ENCODE measurements at regions of chr10 and their contacts with region 1.

Region 1: DNA sequence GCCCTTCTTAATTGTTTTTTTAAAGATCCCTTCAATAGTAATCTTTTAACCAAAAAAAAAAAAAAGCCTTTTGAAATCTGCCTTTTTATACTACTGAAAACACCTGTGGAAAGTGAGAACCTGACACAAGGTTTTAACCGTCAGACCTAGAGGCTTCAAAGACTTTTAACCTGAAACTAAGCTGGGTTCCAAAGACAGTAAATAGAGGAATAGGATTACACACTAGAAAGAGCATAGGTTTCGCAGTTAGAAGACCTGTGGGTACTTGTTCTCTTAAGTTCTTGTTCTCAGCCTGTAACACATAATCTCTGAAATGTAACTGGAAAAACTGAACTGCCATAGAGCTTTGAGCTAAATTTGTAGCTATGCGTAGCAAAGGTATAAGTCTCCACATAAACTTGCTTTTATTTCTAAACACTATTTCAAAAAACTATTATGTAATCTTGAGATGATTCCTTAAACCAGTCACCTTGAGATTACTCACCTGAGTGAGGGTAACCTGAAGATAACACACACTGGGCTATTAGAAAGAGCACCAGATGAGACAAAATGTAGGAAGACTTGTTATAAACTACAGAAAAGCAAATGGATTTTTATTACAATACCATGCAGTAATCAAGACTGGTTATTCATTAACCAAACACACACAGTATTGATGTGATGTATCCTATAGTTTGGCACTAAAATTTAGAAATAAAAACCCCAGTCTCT is 196.6 kb upstream of the FRMD4A start:
- DNase-seq: no peak
- ATAC-seq: peak; percentile 36
- H3K4me3 ChIP-seq: no peak overlapping the region
- H3K27ac ChIP-seq: no peak overlapping the region
- H3K4me1 ChIP-seq: no peaks in the 10 kb centered on the region
- H3K27me3 ChIP-seq: no peaks in the 10 kb centered on the region
- CTCF ChIP-seq: no peak
- EP300 ChIP-seq: no peak
- POLR2A ChIP-seq: no peak
- RAD21 ChIP-seq: no peak

Region 2: DNA sequence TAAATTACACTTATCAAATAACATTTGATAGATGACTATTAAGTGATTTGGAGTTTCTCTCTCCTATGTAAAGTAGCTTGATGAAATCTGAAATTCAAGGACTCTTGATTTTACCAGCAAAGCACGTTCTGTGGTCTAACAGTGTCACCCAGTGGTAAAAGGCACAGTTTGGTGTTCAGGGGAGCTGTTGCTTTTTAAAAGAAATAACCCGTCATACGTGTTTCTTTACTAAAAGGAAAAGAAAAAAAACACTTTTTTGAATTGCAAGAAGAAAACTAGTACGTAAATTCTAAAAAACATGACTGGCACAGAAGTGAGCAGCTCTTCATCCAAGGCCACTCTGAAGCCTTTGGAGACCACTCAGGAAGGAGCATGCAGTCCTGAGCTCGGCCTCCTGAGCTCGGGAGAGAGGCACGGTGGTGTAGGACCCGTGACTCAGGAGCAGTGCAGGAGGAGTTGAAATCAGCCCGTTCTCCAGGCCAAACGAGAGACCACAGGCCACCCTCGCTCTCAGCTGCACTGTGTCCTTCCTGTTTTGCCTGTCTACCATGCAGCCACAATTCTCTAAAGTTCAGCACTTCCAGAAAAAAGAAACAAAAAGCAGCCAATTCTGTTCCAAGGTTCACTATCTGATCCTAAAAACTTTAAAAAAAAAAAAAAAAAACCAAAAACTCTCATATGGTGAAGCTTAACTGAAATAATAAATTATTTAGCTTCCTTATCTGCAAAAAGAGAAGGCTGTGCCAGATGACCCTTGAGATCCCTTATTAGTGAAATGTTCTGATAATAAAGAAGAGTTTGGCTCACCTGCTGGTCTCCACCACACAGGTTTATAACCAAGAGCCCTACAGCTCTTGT is 16.0 kb after region 1 on chr10:
- CTCF ChIA-PET with region 1: interaction called, 6 read pairs
- POLR2A ChIA-PET with region 1: no interaction called
- RAD21 ChIA-PET with region 1: no interaction called
- SMC1A ChIA-PET with region 1: interaction called, 10 read pairs
- in situ Hi-C with region 1: no loop called
- intact Hi-C with region 1: no loop called
- DNase-seq: no peak
- ATAC-seq: peak; percentile 67
- H3K4me3 ChIP-seq: no peak overlapping the region
- H3K27ac ChIP-seq: peak overlapping the region; percentile 38
- H3K4me1 ChIP-seq: peaks cover 10% of the 10 kb centered on the region
- H3K27me3 ChIP-seq: no peaks in the 10 kb centered on the region
- CTCF ChIP-seq: peak; percentile 6 to 29 (median 18); a peak in 4 of 6 replicates
- EP300 ChIP-seq: no peak
- POLR2A ChIP-seq: no peak
- RAD21 ChIP-seq: peak; percentile 39; the same call in 1 of the 2 replicates

Region 3: DNA sequence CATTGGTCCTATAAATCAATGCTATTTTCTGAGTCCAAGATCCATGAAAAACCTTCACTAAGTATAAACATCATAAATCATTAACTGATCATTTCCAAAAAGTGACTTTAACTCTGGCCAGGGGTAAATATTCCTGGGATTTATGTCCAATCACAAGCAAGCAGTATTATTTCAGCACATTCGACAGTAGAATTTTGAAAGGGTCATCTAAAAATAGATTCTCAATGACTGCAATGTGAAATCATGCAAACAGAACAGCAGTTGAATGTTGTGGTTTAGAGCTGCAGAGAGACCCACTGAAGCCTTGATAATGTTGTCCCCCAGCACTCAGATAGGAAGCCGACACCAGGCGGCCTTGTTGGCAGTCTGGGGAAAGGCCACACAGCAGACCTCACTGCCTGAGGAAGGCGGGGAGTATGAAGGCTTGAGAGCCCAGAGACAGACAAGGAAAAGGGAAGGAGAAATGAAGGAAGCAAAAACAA is 209.4 kb after region 1 on chr10:
- CTCF ChIA-PET with region 1: no interaction called
- POLR2A ChIA-PET with region 1: no interaction called
- RAD21 ChIA-PET with region 1: no interaction called
- SMC1A ChIA-PET with region 1: no interaction called
- in situ Hi-C with region 1: no loop called
- intact Hi-C with region 1: no loop called
- DNase-seq: no peak
- ATAC-seq: peak; percentile 78
- H3K4me3 ChIP-seq: no peak overlapping the region
- H3K27ac ChIP-seq: 0 out of 2 replicates have a peak overlapping the region, but pooled peaks have one; percentile 10
- H3K4me1 ChIP-seq: peaks cover 28% of the 10 kb centered on the region
- H3K27me3 ChIP-seq: no peaks in the 10 kb centered on the region
- CTCF ChIP-seq: no peak
- EP300 ChIP-seq: no peak
- POLR2A ChIP-seq: no peak
- RAD21 ChIP-seq: peak; percentile 23; the same call in 1 of the 2 replicates